ENCODE measurements at regions of chr19 and their contacts with region 1.

Region 1: GRCh38 chr19:40139533-40140287 is 49.0 kb upstream of the ZNF780A start:
- DNase-seq: peak in 8 of 35 experiments; percentile 6 to 79 (median 20)
- ATAC-seq: peak in 1 of 4 experiments; percentile 36
- H3K4me3 ChIP-seq: no peak overlapping the region
- H3K4me3 Mint-ChIP-seq: no peak overlapping the region
- H3K27ac ChIP-seq: no peak overlapping the region
- H3K27ac Mint-ChIP-seq: peak overlapping the region in 1 of 2 donors; percentile 46
- H3K4me1 ChIP-seq: peaks cover 12 to 28% of the 10 kb centered on the region in 2 experiments
- H3K4me1 Mint-ChIP-seq: peaks cover 25 to 28% (median 27%) of the 10 kb centered on the region in 3 donors
- H3K27me3 ChIP-seq: no peaks in the 10 kb centered on the region
- H3K27me3 Mint-ChIP-seq: peaks cover 7 to 18% of the 10 kb centered on the region in 2 donors

Region 2: DNA sequence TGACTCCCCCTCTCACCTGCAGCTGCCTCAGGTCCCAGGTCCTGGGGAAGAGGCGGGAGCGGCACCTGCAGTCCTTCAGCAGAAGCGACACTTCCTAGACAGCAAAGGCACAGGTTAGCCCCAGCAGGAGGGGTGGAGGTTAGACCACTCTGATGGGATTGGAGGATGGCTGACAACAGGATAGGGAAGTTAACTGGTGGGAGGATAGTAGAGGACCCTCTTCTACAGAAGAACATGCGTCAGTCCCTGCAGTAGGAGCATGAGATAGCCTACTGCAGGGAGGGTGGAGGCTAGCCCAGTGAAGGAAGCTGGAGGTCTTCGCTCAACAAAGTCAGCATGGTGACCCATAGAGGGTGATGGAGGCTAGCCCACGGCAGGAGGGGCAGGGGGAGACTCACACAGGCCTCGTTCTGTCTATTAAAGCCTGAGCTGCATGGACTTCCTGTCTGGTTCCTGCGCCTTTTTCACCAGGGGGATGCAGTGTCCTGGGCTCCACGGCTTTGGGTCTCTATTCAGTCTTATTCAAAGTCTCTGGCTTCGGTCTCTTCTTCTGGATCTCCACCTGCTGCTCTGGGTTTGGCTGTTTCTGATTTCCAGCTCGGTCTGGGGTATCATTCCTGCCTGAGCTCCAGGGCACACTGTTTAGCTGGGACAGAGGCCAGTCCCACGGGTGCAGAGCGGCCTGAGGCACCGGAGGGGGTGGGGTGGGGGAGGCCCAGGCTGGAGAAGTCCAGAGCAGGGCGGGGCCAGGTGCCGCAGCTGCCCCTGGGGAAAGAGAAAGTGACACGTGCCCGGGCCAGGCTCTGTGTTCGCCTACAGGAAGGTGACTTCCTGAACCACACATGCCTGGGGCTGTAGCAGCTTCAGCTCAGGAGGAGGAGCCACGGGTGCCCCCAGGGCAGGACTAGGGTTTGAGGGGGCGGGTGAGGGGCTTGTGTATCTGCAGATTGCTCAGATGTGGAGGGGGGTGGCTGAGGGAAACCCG is 902.2 kb before region 1 on chr19:
- CTCF ChIA-PET with region 1: interaction called in 1 of 2 experiments, 18 read pairs
- POLR2A ChIA-PET with region 1: no interaction called
- DNase-seq: peak in 25 of 35 experiments; percentile 12 to 52 (median 20)
- ATAC-seq: peak; percentile 68 to 85 (median 82)
- H3K4me3 ChIP-seq: peak overlapping the region in 1 of 2 donors; percentile 32
- H3K4me3 Mint-ChIP-seq: peak overlapping the region; percentile 74 to 78 (median 74)
- H3K27ac ChIP-seq: peak overlapping the region; percentile 58
- H3K27ac Mint-ChIP-seq: peak overlapping the region; percentile 90 to 92
- H3K4me1 ChIP-seq: peaks cover 0 to 27% of the 10 kb centered on the region in 2 experiments
- H3K4me1 Mint-ChIP-seq: peaks cover 29 to 33% (median 29%) of the 10 kb centered on the region in 3 donors
- H3K27me3 ChIP-seq: no peaks in the 10 kb centered on the region
- H3K27me3 Mint-ChIP-seq: no peaks in the 10 kb centered on the region

Region 3: GRCh38 chr19:40165362-40165937 is 25.7 kb after region 1 on chr19:
- CTCF ChIA-PET with region 1: interaction called, 4 to 15 read pairs
- POLR2A ChIA-PET with region 1: no interaction called
- DNase-seq: peak; percentile 3 to 77 (median 52)
- ATAC-seq: peak; percentile 68 to 84 (median 76)
- H3K4me3 ChIP-seq: no peak overlapping the region
- H3K4me3 Mint-ChIP-seq: peak overlapping the region in 1 of 3 donors; percentile 35
- H3K27ac ChIP-seq: no peak overlapping the region
- H3K27ac Mint-ChIP-seq: peak overlapping the region in 1 of 2 donors; percentile 65
- H3K4me1 ChIP-seq: peaks cover 0 to 28% of the 10 kb centered on the region in 2 experiments
- H3K4me1 Mint-ChIP-seq: peaks cover 8 to 22% (median 22%) of the 10 kb centered on the region in 3 donors
- H3K27me3 ChIP-seq: no peaks in the 10 kb centered on the region
- H3K27me3 Mint-ChIP-seq: no peaks in the 10 kb centered on the region

Region 4: DNA sequence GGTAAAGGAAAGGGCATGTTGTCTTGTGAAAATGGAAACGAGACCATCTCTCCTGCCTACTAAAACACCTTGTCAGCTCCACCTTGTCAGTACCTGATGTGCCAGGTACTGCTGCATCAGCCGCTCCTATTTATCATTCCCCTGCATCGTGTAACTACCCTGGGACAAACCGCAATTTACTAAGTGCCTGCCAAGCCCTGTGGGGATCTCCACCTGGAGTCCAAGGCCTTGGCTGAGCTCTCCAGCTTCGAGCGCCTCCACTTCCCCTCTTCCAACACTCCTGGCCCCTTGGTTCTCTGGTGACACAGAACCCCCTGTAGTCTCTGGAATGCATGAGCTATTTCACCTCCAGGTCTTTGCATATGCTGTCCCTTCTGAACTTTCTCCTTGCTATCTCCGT is 112.7 kb after region 1 on chr19:
- CTCF ChIA-PET with region 1: no interaction called
- POLR2A ChIA-PET with region 1: no interaction called
- DNase-seq: no peak
- ATAC-seq: no peak
- H3K4me3 ChIP-seq: no peak overlapping the region
- H3K4me3 Mint-ChIP-seq: no peak overlapping the region
- H3K27ac ChIP-seq: no peak overlapping the region
- H3K27ac Mint-ChIP-seq: no peak overlapping the region
- H3K4me1 ChIP-seq: peaks cover 0 to 8% of the 10 kb centered on the region in 2 experiments
- H3K4me1 Mint-ChIP-seq: peaks cover 18 to 30% (median 27%) of the 10 kb centered on the region in 3 donors
- H3K27me3 ChIP-seq: no peaks in the 10 kb centered on the region
- H3K27me3 Mint-ChIP-seq: no peaks in the 10 kb centered on the region

Measured in T-cell (primary cell).